Right ventricle myocardium inferior (tissue), 1 donor: ENCODE measurements at regions of chr9 and their contacts with region 1.

Region 1: GRCh38 chr9:35603987-35604577 is 980 bp upstream of the TESK1 start:
- DNase-seq: peak; percentile 100
- ATAC-seq: peak; percentile 97

Region 2: DNA sequence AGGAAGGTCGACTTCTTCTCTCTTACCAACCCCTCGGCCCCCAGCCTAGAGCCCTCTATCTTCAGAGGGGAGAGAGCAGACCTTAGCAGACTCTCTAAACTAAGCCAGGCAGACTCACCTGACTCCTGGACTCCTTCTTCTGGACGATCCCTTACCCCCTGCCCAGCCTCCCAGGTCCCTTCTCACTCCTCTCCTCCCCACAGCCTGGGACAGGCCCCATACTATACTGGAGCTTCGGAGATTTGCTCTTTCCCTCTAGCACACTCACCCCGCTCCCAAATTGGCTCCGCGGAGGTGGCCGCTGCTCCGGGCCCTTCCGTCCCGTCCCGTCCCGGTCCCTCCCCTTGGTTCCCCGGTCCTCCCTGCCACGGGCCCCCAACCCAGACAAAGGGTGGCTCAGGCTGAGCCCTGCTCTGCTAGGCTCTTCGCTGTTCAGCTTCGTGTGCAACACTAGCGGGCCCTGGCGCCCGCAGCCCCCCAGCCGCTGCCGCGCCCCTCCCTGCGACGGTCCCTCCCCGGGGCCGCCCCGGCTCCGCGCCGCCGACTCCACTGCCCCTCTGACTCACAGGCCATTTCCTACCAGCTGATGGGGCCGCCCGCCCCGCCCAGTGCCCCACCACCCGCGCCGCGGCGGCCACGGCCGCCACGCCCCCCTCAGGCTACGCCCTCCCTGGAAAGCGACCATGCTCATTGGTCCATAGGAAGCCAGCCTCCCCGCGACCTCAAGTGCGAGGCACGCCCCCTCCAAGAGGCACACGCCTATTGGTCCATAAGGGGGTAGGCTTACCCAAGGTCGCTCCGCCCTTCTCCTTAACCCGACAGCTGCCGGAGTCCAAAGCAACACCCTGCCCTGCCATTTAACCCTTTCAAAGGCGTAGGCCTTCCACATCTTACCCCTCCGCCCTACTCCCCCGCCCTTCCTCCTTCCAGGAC is 492.8 kb before region 1 on chr9:
- intact Hi-C with region 1: loop called (anchors 5 kb)
- DNase-seq: peak; percentile 99
- ATAC-seq: peak; percentile 87

Region 3: GRCh38 chr9:35489313-35490154 is 114.5 kb before region 1 on chr9 and contains the start of gene RUSC2:
- intact Hi-C with region 1: loop called (anchors 5 kb)
- DNase-seq: peak; percentile 90
- ATAC-seq: peak; percentile 90
- total RNA-seq, gene RUSC2: 25.1 TPM

Region 4: GRCh38 chr9:35563791-35564197 is 40.3 kb before region 1 on chr9:
- intact Hi-C with region 1: loop called (anchors 5 kb)
- DNase-seq: peak; percentile 63
- ATAC-seq: peak; percentile 76

Region 5: DNA sequence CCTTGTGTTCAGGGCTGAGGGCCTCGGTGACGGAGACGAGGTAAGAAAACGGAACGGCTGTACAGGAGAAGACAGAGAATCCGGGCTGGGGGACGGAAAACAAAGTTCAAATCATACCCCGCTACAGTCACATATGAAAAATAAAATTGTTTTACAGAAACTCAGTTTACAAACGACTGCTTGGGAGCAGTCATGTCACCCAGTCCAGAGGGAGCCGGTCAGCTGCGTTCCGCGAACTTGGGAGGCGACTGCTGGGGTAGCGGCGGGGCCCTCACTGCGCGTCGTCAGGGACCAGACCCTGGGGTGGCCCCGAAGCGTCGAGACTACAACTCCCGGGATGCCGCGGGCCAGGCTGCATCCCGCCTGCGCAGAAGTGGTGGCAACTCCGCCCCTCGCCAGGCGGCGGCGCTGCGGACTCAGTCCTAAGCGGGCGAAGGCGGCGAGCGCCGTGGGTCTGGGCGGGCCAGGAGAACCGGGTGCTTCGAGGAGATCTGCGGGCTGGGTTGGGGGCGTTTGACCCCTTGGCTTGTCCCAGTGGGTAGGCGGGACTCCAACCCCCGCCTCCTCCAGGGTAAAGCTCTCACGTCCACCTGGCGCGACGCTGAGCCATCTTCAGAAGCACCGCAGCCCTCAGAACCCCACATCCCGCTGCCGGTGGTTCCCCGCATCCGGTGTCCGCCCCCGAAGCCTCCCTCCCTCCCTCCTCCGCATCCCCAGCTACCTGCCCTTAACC is 42.6 kb after region 1 on chr9:
- intact Hi-C with region 1: loop called (anchors 2 kb)
- DNase-seq: peak; percentile 97
- ATAC-seq: peak; percentile 97